ENCODE measurements at regions of chr15 and their contacts with region 1.

Region 1: GRCh38 chr15:58070801-58071418 is 5.4 kb upstream of the ALDH1A2 start:
- ATAC-seq: peak in 3 of 8 experiments; percentile 29 to 41 (median 33)
- H3K4me3 ChIP-seq: no peak overlapping the region
- H3K27ac ChIP-seq: no peak overlapping the region
- H3K4me1 ChIP-seq: no peaks in the 10 kb centered on the region

Region 2: DNA sequence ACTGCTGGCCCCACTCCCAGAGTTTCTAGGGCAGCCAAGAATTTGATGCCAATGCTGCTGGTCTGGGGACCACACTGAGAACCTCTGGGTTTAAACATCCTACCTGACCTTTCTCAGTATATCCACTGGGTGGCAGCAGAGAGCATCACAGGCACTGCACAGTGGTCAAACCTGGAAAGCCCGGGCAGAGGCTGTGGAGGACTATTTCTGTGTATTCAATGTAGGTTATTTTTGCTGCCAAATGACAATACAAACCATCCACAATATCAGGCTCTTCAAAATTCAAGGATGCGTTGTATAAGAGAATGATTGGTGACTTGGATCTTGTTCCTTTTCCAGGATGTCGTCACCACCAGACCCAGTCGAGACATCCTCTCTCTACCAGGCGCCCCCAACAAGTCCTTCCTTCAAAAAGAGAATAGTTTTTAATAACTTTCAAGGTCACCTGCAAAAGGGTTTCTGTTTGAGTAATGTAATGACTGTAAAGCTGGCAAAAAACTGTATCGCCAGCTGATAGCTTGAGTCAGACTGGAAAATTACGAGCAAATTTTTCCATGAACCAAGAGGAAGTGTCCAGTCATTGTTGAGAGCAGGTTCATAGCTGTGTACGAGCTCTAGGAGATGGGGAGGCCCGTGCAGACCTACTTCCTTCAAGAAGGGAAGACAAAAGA is 509.7 kb before region 1 on chr15:
- in situ Hi-C with region 1: loop called in 3 of 9 experiments (anchors 25 kb)
- ATAC-seq: peak; percentile 79 to 98 (median 94)
- H3K4me3 ChIP-seq: no peak overlapping the region
- H3K27ac ChIP-seq: no peak overlapping the region
- H3K4me1 ChIP-seq: no peaks in the 10 kb centered on the region

Region 3: DNA sequence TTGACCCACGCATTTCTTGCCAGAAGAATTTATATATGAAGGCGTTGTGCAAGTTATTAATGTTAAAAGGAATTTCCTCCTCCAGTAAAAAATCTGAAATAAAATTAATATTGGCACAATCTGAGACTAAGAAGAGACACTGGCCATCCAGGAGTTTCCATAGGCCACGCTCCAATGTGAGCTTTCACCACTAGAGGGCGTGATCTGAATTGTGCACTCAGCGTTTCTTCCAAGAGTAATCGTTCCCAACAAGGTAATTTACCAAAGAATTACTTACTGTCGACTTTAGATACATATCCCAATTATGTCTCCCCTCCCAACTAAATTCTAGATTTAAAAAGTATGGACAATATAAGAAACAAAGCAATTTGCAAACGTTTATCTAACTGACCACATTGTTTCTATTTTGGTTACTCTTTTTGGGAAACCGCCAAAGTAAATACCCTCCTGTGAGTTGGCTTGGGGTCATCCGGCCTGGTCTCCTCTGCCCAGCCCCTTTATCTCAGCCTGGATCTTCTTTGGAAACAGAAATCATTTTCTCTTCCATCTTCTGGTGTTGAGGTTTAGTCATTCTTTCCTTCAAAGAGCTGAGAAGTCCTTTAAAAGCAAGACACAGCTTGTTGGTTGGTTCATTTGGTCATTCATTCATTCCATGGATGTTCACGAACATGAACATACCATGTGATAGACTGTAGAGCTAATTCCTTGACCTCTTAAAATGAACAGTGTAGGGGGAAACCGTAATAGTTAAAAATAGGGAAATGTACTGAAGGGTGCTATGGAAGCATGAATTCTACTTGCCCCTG is 338.2 kb before region 1 on chr15:
- in situ Hi-C with region 1: loop called in 1 of 9 experiments (anchors 25 kb)
- ATAC-seq: peak in 4 of 8 experiments; percentile 37 to 76 (median 68)
- H3K4me3 ChIP-seq: no peak overlapping the region
- H3K27ac ChIP-seq: no peak overlapping the region
- H3K4me1 ChIP-seq: peaks cover 7 to 8% of the 10 kb centered on the region in 2 donors

Region 4: GRCh38 chr15:57743424-57743823 is 327.5 kb before region 1 on chr15:
- in situ Hi-C with region 1: loop called in 3 of 9 experiments (anchors 10 to 25 kb)
- ATAC-seq: no peak
- H3K4me3 ChIP-seq: no peak overlapping the region
- H3K27ac ChIP-seq: no peak overlapping the region
- H3K4me1 ChIP-seq: peaks cover 12 to 25% of the 10 kb centered on the region in 2 donors